ENCODE measurements at regions of chr1 and their contacts with region 1.

Region 1: GRCh38 chr1:15444468-15445389 is 6.5 kb downstream of the CTRC start:
- DNase-seq: no peak
- ATAC-seq: peak in 3 of 8 donors; percentile 32 to 51 (median 34)
- H3K4me3 ChIP-seq: no peak overlapping the region
- H3K27ac ChIP-seq: no peak overlapping the region
- H3K4me1 ChIP-seq: peaks cover 0 to 4% (median 0%) of the 10 kb centered on the region in 9 donors
- H3K27me3 ChIP-seq: peaks cover 0 to 18% (median 8%) of the 10 kb centered on the region in 7 donors
- CTCF ChIP-seq: no peak

Region 2: GRCh38 chr1:15384301-15384901 is 60.3 kb before region 1 on chr1:
- intact Hi-C with region 1: loop called in 2 of 10 experiments (anchors 10 kb)
- DNase-seq: no peak
- ATAC-seq: peak in 4 of 8 donors; percentile 39 to 56 (median 50)
- H3K4me3 ChIP-seq: peak overlapping the region in 1 of 10 donors; percentile 18
- H3K27ac ChIP-seq: no peak overlapping the region
- H3K4me1 ChIP-seq: peaks cover 0 to 16% (median 5%) of the 10 kb centered on the region in 9 donors
- H3K27me3 ChIP-seq: peaks cover 0 to 54% (median 30%) of the 10 kb centered on the region in 7 donors
- CTCF ChIP-seq: no peak

Region 3: GRCh38 chr1:15465674-15466073 is 20.9 kb after region 1 on chr1:
- intact Hi-C with region 1: no loop called
- DNase-seq: no peak
- ATAC-seq: no peak
- H3K4me3 ChIP-seq: no peak overlapping the region
- H3K27ac ChIP-seq: no peak overlapping the region
- H3K4me1 ChIP-seq: peaks cover 0 to 13% (median 0%) of the 10 kb centered on the region in 9 donors
- H3K27me3 ChIP-seq: no peaks in the 10 kb centered on the region
- CTCF ChIP-seq: no peak

Region 4: GRCh38 chr1:15573477-15573876 is 128.7 kb after region 1 on chr1:
- intact Hi-C with region 1: no loop called
- DNase-seq: no peak
- ATAC-seq: no peak
- H3K4me3 ChIP-seq: no peak overlapping the region
- H3K27ac ChIP-seq: no peak overlapping the region
- H3K4me1 ChIP-seq: peaks cover 0 to 8% (median 0%) of the 10 kb centered on the region in 9 donors
- H3K27me3 ChIP-seq: no peaks in the 10 kb centered on the region
- CTCF ChIP-seq: no peak

Region 5: GRCh38 chr1:15627343-15627988 is 182.7 kb after region 1 on chr1:
- intact Hi-C with region 1: no loop called
- DNase-seq: no peak
- ATAC-seq: peak in 5 of 8 donors; percentile 56 to 73 (median 59)
- H3K4me3 ChIP-seq: no peak overlapping the region
- H3K27ac ChIP-seq: peak overlapping the region in 3 of 10 donors; percentile 17 to 34 (median 18)
- H3K4me1 ChIP-seq: peaks cover 2 to 64% (median 43%) of the 10 kb centered on the region in 9 donors
- H3K27me3 ChIP-seq: no peaks in the 10 kb centered on the region
- CTCF ChIP-seq: no peak